IMR-90 (cell line): ENCODE measurements at regions of chr10 and their contacts with region 1.

Region 1: GRCh38 chr10:87915989-87916388 is 52.6 kb downstream of the PTEN start:
- DNase-seq: peak; percentile 33
- ATAC-seq: no peak
- H3K4me3 ChIP-seq: no peak overlapping the region
- H3K27ac ChIP-seq: no peak overlapping the region
- H3K4me1 ChIP-seq: peaks cover 5% of the 10 kb centered on the region; the same call in 1 of the 2 replicates
- H3K27me3 ChIP-seq: no peaks in the 10 kb centered on the region
- CTCF ChIP-seq: no peak
- POLR2A ChIP-seq: no peak
- RAD21 ChIP-seq: no peak

Region 2: DNA sequence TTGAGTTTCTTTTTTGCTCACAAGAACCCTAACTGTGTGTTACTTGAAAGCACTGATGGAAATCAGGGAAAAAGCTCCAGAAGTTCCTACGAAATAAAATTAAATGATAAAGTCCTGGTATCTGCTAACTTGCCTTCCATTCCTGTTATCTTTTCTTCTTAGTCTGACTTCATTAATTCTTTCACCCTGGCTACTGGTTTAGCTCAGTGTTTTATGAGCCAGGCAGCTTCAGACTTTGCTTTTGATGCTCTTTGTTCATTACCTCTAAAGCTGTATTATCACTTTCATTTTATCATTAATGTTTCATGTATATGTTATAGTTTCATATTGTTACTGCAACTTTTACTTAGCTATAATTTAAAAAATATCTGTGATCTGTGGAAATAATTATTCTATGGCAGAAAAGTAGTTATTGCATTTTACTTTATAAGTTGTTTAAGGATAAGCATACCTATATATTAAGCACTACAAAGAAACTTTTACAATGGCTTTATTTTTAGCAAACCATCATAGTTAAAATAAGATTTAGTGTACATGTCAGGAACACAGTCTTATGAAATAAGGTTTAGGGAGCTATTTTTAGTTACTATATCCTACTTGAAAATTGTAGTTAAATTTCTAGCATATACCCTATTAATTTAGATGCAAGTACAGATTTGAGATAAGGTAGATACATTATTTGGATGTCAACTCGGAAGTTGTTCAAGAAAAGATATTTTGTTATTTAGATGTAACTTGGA is 33.3 kb before region 1 on chr10:
- CTCF ChIA-PET with region 1: no interaction called
- POLR2A ChIA-PET with region 1: no interaction called
- dilution Hi-C with region 1: no loop called
- in situ Hi-C with region 1: no loop called
- intact Hi-C with region 1: loop called (anchors 5 kb)
- DNase-seq: no peak
- ATAC-seq: no peak
- H3K4me3 ChIP-seq: no peak overlapping the region
- H3K27ac ChIP-seq: no peak overlapping the region
- H3K4me1 ChIP-seq: no peaks in the 10 kb centered on the region
- H3K27me3 ChIP-seq: no peaks in the 10 kb centered on the region
- CTCF ChIP-seq: no peak
- POLR2A ChIP-seq: no peak
- RAD21 ChIP-seq: no peak

Region 3: DNA sequence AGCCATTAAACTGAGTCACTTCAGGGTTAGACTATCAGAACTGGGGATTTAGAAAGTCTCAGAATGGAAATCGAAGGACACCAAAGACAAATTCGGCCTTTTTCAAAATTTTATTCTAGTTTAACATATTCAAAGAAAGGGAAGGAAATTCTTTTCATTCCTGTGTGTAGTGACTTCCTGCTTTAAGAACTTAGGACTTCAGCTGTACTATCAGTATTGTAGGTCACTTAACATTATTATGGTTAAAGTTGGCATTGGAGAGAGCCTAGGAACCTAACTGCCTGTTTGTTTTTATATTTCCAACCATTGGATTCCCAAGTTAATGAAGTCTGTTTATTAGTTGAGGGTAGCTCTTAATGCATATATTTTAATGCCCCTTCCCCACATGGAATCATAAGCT is 11.1 kb after region 1 on chr10:
- CTCF ChIA-PET with region 1: no interaction called
- POLR2A ChIA-PET with region 1: no interaction called
- dilution Hi-C with region 1: no loop called
- in situ Hi-C with region 1: no loop called
- intact Hi-C with region 1: no loop called
- DNase-seq: no peak
- ATAC-seq: no peak
- H3K4me3 ChIP-seq: no peak overlapping the region
- H3K27ac ChIP-seq: no peak overlapping the region
- H3K4me1 ChIP-seq: peaks cover 3% of the 10 kb centered on the region; the same call in 1 of the 2 replicates
- H3K27me3 ChIP-seq: no peaks in the 10 kb centered on the region
- CTCF ChIP-seq: no peak
- POLR2A ChIP-seq: no peak
- RAD21 ChIP-seq: no peak